ENCODE measurements at regions of chr9 and their contacts with region 1.

Region 1: GRCh38 chr9:70285246-70285645 is 26.5 kb downstream of the SMC5 start:
- DNase-seq: no peak
- H3K4me3 Mint-ChIP-seq: no peak overlapping the region
- H3K27ac Mint-ChIP-seq: no peak overlapping the region
- H3K4me1 Mint-ChIP-seq: peaks cover 7% of the 10 kb centered on the region
- H3K27me3 Mint-ChIP-seq: no peaks in the 10 kb centered on the region

Region 2: DNA sequence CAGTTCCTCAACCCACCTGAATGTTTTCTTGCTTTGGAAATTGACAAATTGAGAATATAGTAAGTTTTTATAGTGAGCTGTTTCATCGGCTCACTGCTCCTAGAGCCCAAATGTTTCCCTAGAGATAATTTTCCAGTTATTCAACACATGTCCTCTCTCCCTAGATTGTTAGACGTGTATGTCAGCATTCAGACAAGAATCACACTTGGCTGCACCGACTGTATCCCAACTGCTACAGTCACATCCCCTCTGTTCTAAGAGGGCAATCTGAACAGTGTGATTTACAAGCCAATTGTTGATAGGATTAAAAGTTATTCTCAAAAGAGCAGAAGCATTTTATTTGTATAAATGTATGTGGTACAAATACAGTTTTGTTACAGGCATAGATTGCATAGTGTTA is 147.7 kb before region 1 on chr9:
- CTCF ChIA-PET with region 1: no interaction called
- intact Hi-C with region 1: no loop called
- DNase-seq: no peak
- H3K4me3 Mint-ChIP-seq: no peak overlapping the region
- H3K27ac Mint-ChIP-seq: no peak overlapping the region
- H3K4me1 Mint-ChIP-seq: no peaks in the 10 kb centered on the region
- H3K27me3 Mint-ChIP-seq: peaks cover 2% of the 10 kb centered on the region

Region 3: GRCh38 chr9:70303268-70303667 is 18.0 kb after region 1 on chr9:
- CTCF ChIA-PET with region 1: no interaction called
- intact Hi-C with region 1: no loop called
- DNase-seq: no peak
- H3K4me3 Mint-ChIP-seq: no peak overlapping the region
- H3K27ac Mint-ChIP-seq: no peak overlapping the region
- H3K4me1 Mint-ChIP-seq: no peaks in the 10 kb centered on the region
- H3K27me3 Mint-ChIP-seq: no peaks in the 10 kb centered on the region

Region 4: DNA sequence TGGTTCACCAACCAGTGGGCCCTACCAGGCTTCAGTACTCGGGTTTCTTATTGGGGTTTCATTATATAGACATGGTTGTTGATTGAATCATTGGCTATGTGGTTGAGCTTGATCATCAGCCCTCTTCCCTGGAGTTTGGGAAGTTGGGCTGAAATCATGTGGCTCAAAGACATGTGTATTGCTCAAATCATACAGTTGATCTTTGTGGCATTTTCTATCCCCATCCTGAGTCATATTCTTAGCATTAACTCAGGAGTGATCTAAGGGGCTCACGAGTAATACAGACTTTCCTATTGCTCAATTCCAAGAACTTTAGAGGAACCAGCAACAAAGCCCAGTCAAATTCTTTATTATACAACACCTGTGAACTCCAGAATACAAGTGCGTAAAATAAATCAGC is 39.7 kb after region 1 on chr9:
- CTCF ChIA-PET with region 1: no interaction called
- intact Hi-C with region 1: loop called (anchors 5 kb)
- DNase-seq: no peak
- H3K4me3 Mint-ChIP-seq: no peak overlapping the region
- H3K27ac Mint-ChIP-seq: no peak overlapping the region
- H3K4me1 Mint-ChIP-seq: no peaks in the 10 kb centered on the region
- H3K27me3 Mint-ChIP-seq: no peaks in the 10 kb centered on the region

Measured in activated naive CD4-positive, alpha-beta T cell treated with anti-CD3 and anti-CD28 coated beads for 36 hours (primary cell).